Pancreas (tissue), 10 donors: ENCODE measurements at regions of chr20 and their contacts with region 1.

Region 1: GRCh38 chr20:6819605-6820004 is 52.1 kb downstream of the BMP2 start:
- DNase-seq: peak in 3 of 6 donors; percentile 4 to 24 (median 16)
- ATAC-seq: peak; percentile 81 to 95 (median 88)
- H3K4me3 ChIP-seq: no peak overlapping the region
- H3K27ac ChIP-seq: no peak overlapping the region
- H3K4me1 ChIP-seq: no peaks in the 10 kb centered on the region
- H3K27me3 ChIP-seq: no peaks in the 10 kb centered on the region
- CTCF ChIP-seq: peak in 3 of 4 donors; percentile 15 to 29 (median 24)

Region 2: DNA sequence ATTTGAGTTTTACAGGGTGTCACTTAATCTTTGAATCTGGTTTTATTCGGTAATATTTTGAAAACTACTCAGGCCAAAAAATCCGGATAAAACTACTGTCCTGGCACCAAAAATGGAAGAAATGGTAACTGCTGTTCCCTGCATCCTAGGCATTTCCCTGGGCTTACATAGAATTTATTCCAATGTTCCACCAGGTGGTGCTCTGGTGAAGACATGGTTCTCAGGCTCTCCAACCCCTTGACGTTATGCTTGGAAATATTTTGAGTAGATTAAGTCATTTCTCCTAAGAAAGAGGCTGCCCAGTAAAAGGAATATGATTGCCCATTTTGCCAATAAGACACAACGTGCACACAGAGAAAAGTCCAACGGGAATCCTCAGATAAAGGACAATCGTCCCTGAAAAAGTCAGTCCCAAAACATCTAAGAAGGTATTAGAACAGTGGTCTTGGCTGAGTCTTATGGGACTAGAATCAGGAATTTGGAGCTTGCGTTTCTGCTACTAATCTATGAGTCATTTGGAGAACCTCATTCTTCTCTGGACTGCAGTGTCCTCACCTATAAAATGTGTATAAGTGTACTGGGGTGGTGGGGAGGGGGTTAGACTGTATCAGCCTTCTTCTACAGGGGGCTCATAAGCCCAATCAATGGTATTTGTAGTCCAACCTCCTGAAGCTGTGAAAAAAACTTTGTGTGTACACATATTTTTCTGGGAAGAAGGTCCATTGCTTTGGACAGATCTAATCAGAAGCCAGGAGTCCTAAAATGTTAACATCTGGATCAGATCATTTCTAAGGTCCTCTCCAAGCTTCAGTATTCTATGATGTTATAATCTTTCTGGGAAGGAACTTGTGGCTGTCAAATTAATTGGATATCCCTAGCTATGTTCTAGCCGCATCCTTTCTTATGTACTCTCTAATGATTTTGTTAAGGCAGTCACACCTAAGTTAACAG is 183.1 kb before region 1 on chr20:
- intact Hi-C with region 1: loop called in 1 of 3 experiments (anchors 5 kb)
- DNase-seq: peak in 3 of 6 donors; percentile 43 to 53 (median 44)
- ATAC-seq: peak; percentile 97 to 98 (median 98)
- H3K4me3 ChIP-seq: no peak overlapping the region
- H3K27ac ChIP-seq: no peak overlapping the region
- H3K4me1 ChIP-seq: peaks cover 0 to 6% (median 0%) of the 10 kb centered on the region in 3 donors
- H3K27me3 ChIP-seq: no peaks in the 10 kb centered on the region
- CTCF ChIP-seq: peak; percentile 44 to 58 (median 46)

Region 3: GRCh38 chr20:8656335-8656734 is 1836.7 kb after region 1 on chr20:
- intact Hi-C with region 1: no loop called
- DNase-seq: no peak
- ATAC-seq: no peak
- H3K4me3 ChIP-seq: no peak overlapping the region
- H3K27ac ChIP-seq: no peak overlapping the region
- H3K4me1 ChIP-seq: no peaks in the 10 kb centered on the region
- H3K27me3 ChIP-seq: no peaks in the 10 kb centered on the region
- CTCF ChIP-seq: no peak